Heart right ventricle (tissue), 16 donors: ENCODE measurements at regions of chr2 and their contacts with region 1.

Region 1: GRCh38 chr2:98385050-98385699 is 38.9 kb downstream of the CNGA3 start:
- DNase-seq: peak; percentile 65 to 73
- ATAC-seq: peak; percentile 64 to 88 (median 83)
- H3K4me3 ChIP-seq: no peak overlapping the region
- H3K27ac ChIP-seq: no peak overlapping the region
- H3K4me1 ChIP-seq: no peaks in the 10 kb centered on the region
- H3K27me3 ChIP-seq: peaks cover 0 to 2% (median 0%) of the 10 kb centered on the region in 7 donors
- CTCF ChIP-seq: peak; percentile 68 to 96 (median 89)

Region 2: DNA sequence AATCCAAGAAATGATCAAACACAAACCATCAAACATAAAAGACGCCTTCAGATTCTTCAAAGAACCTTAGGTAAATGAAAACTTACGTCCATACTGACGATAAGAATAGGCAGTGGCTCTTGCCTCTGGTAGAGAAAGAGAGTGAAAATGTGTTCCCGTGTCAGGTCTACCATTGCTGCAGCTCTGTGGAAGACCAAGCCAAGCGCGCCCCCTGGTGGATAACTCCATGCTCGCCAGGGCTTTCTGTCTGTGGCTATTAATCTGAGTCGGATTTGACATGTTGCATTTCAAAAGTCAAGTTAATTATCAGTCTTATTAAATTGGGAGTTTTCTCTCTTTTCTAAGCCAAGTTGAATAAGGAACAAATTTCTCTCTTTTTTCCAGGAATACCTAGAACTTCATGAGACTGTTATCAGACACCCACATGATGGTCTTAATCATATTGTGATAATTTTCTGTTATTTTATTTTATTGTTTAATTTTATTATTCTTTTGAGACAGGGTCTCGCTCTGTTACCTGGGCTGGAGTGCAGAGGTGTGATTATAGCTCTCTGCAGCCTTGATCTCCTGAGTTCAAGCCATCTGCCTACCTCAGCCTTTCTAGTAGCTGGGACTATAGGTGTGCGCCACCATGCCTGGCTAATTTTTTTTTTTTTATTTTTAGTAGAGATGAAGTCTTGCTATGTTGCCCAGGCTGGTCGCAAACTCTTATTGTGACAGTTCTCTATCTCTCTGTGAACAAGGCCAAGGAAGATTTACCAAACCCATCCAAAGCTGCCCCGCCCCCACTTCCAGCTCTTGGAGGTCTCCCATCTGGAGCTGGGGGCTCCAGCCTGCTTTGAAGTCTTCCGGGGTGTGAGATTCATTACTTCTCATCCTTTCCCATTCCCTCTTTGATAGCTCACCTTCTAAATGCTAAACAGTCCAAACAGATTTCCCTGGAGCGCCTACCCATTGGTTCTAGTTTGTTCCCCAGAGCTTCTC is 687.6 kb before region 1 on chr2:
- intact Hi-C with region 1: loop called in 7 of 10 experiments (anchors 5 to 10 kb)
- DNase-seq: peak; percentile 91 to 92
- ATAC-seq: peak; percentile 86 to 96 (median 92)
- H3K4me3 ChIP-seq: no peak overlapping the region
- H3K27ac ChIP-seq: no peak overlapping the region
- H3K4me1 ChIP-seq: peaks cover 0 to 7% (median 4%) of the 10 kb centered on the region in 9 donors
- H3K27me3 ChIP-seq: no peaks in the 10 kb centered on the region
- CTCF ChIP-seq: peak; percentile 91 to 98 (median 97)

Region 3: GRCh38 chr2:97718051-97718882 is 666.9 kb before region 1 on chr2:
- intact Hi-C with region 1: loop called in 1 of 10 experiments (anchors 10 kb)
- DNase-seq: no peak
- ATAC-seq: peak in 1 of 8 donors; percentile 10
- H3K4me3 ChIP-seq: peak overlapping the region in 1 of 10 donors; percentile 36
- H3K27ac ChIP-seq: peak overlapping the region in 1 of 10 donors; percentile 75
- H3K4me1 ChIP-seq: peaks cover 0 to 3% (median 0%) of the 10 kb centered on the region in 9 donors
- H3K27me3 ChIP-seq: no peaks in the 10 kb centered on the region
- CTCF ChIP-seq: no peak

Region 4: GRCh38 chr2:97730245-97730644 is 654.9 kb before region 1 on chr2:
- intact Hi-C with region 1: loop called in 1 of 10 experiments (anchors 10 kb)
- DNase-seq: no peak
- ATAC-seq: no peak
- H3K4me3 ChIP-seq: no peak overlapping the region
- H3K27ac ChIP-seq: no peak overlapping the region
- H3K4me1 ChIP-seq: peaks cover 12 to 39% (median 30%) of the 10 kb centered on the region in 9 donors
- H3K27me3 ChIP-seq: no peaks in the 10 kb centered on the region
- CTCF ChIP-seq: no peak

Region 5: DNA sequence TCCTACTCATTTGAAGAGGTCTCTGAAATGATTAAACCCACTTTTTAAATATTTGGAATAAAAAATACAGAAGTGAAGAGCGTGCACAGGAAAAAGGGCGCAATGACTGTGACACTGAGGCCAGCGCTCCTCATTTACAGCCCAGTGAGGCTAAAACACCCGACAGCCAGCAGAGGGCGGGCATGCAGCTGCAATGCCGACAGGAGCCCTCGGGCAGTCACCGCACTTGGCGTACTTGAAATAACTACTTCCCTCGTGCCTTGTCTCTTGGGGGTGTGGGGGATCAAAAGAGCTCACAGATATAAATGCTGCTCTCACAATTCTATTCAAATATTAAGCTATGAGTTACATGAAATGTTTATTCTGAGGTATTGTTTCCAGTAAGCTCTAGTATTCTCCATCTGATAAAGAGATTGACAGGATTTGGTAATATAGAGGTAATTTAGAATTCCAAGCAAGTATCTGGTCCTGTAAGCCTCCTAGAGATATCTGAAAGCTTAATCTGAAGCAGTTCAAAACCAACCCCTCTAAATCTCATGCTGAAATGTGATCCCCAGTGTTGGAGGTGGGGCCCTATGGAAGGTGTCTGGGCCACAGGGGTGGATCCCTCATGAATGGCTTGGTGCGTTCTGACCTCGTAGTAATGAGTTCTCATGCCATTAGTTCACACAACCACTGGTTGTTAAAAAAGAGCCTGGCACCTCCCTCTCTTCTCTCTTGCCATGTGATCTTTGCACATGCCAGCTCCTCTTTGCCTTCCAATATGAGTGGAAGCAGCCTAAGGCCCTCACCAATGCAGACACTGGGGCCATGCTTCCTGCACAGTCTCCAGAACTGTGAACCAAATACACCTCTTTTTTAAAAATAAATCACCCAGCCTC is 578.2 kb before region 1 on chr2:
- intact Hi-C with region 1: loop called (anchors 1 to 10 kb)
- DNase-seq: peak; percentile 82 to 87
- ATAC-seq: peak; percentile 91 to 99 (median 97)
- H3K4me3 ChIP-seq: no peak overlapping the region
- H3K27ac ChIP-seq: peak overlapping the region in 2 of 10 donors; percentile 2 to 31
- H3K4me1 ChIP-seq: peaks cover 0 to 14% (median 4%) of the 10 kb centered on the region in 9 donors
- H3K27me3 ChIP-seq: no peaks in the 10 kb centered on the region
- CTCF ChIP-seq: peak; percentile 66 to 98 (median 95)

Region 6: GRCh38 chr2:97995734-97996624 is 389.2 kb before region 1 on chr2 and contains the start of gene TMEM131:
- intact Hi-C with region 1: loop called in 2 of 10 experiments (anchors 10 kb)
- DNase-seq: peak; percentile 95 to 96
- ATAC-seq: peak; percentile 97 to 99 (median 97)
- H3K4me3 ChIP-seq: peak within 1 kb of the TSS; percentile 61 to 91 (median 86)
- H3K27ac ChIP-seq: peak within 1 kb of the TSS; percentile 94 to 99 (median 96)
- H3K4me1 ChIP-seq: peaks cover 0 to 45% (median 31%) of the 10 kb centered on the region in 9 donors
- H3K27me3 ChIP-seq: no peaks in the 10 kb centered on the region
- CTCF ChIP-seq: no peak
- total RNA-seq, gene TMEM131: 26.3 to 34.3 (median 30.7) TPM

Region 7: GRCh38 chr2:98175811-98176210 is 209.4 kb before region 1 on chr2:
- intact Hi-C with region 1: no loop called
- DNase-seq: no peak
- ATAC-seq: peak in 1 of 8 donors; percentile 25
- H3K4me3 ChIP-seq: no peak overlapping the region
- H3K27ac ChIP-seq: no peak overlapping the region
- H3K4me1 ChIP-seq: peaks cover 0 to 6% (median 0%) of the 10 kb centered on the region in 9 donors
- H3K27me3 ChIP-seq: peaks cover 0 to 40% (median 0%) of the 10 kb centered on the region in 7 donors
- CTCF ChIP-seq: peak in 5 of 9 donors; percentile 11 to 28 (median 25)

Region 8: GRCh38 chr2:98634401-98635092 is 249.4 kb after region 1 on chr2:
- intact Hi-C with region 1: no loop called
- DNase-seq: no peak
- ATAC-seq: no peak
- H3K4me3 ChIP-seq: no peak overlapping the region
- H3K27ac ChIP-seq: no peak overlapping the region
- H3K4me1 ChIP-seq: no peaks in the 10 kb centered on the region
- H3K27me3 ChIP-seq: no peaks in the 10 kb centered on the region
- CTCF ChIP-seq: peak in 1 of 9 donors; percentile 17

Region 9: DNA sequence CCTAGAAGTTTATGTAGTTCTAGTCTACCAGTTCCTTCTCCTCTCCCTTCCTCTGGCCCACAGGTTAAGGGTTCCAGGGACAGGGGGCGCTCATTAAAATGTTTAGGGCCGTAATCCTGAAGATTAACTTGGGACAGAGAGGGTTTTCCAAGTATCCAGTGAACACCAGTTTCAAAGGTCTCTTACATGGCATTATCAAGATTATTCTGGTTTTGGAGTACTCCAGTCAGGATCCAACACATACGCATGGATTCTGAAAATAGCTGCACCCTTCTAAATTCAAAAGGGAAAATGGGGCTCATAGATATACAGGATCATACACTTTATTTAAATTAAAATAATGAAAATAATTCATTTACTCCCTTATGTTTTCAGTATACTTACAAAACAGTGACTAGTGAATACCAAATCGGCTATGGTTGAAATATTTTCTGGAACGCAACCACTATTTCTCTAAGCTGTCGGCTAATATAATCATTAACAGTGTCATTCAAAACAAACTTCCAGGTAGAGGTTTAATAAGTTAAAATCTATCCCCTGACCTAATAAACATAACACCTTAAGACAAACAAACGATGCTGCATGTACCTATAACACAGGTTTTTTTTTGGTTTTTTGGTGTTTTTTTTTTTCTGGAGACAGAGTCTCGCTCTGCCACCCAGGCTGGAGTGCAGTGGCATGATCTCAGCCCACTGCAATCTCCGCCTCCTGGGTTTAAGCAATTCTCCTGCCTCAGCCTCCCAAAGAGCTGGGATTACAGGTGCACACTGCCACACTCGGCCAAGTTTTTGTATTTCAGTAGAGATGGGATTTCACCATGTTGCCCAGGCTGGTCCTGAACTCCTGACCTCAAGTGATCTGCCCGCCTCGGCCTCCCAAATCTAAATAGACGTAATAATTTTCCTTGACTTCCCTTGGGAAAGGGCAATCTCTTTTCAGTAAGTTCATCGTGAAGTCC is 301.0 kb after region 1 on chr2:
- intact Hi-C with region 1: no loop called
- DNase-seq: no peak
- ATAC-seq: no peak
- H3K4me3 ChIP-seq: no peak overlapping the region
- H3K27ac ChIP-seq: no peak overlapping the region
- H3K4me1 ChIP-seq: peaks cover 0 to 23% (median 5%) of the 10 kb centered on the region in 9 donors
- H3K27me3 ChIP-seq: no peaks in the 10 kb centered on the region
- CTCF ChIP-seq: no peak